Astrocyte of the spinal cord (primary cell): ENCODE measurements at regions of chr3 and their contacts with region 1.

Region 1: DNA sequence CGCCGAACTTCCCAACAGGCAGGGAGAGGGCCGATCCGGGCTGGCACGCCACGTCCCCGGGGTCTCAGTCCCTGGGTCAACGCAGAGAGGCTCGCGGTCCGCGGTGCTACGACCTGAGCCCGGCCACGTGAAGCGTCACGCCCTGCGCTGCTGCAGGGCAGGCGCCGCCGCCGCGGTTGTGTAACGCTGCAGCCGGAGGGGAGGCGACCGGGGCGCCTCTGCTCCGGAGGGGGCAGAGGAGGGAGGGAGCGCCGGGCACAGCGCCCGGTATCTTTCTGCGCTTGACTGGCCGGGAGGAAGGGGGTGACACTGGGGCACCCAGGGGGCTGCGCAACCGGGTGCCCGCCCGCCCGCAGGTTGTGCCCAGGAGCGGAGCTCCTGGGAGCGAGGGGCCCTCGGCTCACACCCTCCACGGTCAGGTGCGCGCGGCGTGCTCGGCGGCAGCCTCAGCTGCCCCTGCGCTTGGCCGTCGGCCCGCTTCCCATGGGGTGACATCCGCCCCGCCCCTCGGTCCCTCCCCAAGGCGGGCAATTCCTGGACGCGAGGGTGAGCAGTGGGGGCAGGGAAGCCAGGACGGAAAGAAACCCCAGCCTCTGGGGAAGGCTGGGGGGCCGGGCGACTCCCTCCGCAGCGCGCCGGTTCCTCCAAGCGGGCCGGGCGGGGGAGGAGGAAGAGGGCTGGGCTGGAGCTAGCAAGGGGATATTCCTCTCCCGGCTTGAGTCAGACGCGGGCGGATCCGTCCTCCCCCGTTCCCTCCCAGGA is 852 bp upstream of the BHLHE40 start:
- DNase-seq: peak; percentile 100
- H3K4me3 ChIP-seq: peak overlapping the region; percentile 52
- CTCF ChIP-seq: no peak

Region 2: DNA sequence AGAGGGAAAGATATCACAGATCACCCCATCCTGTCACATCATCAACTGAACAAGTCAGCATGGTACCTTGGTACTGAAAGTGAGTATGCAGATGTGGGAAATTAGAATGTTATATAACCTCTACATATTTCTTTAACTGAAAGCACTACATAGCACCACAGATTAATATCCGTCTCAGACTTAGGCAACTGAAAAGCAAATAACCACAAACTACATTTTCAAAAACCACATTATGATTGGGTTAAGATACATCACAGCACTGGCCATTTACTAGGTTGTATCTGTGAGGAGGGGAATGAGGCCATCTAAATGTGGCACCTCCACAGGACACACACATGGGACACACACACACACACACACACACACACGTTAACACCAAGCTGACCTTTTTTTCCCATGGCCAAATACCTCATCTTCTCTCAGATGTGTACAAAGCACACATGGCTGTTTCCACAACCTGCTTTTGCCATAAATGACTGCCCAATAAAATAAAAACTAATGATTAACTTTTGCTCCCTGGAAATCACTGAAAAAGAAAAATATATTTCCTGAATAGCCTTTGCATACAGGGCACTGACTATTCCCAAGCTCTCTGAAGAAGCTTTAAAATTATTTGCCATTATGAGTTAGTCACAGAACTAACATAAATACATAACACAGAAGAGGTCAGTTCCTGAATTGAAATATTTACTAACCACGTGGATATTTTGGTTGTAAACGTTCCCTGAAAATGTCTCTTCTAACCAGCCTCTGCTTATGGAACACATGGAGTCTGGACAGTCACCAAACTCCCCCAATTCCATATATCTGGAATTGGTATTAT is 571.4 kb before region 1 on chr3:
- in situ Hi-C with region 1: no loop called
- DNase-seq: peak; percentile 15
- H3K4me3 ChIP-seq: no peak overlapping the region
- CTCF ChIP-seq: no peak

Region 3: DNA sequence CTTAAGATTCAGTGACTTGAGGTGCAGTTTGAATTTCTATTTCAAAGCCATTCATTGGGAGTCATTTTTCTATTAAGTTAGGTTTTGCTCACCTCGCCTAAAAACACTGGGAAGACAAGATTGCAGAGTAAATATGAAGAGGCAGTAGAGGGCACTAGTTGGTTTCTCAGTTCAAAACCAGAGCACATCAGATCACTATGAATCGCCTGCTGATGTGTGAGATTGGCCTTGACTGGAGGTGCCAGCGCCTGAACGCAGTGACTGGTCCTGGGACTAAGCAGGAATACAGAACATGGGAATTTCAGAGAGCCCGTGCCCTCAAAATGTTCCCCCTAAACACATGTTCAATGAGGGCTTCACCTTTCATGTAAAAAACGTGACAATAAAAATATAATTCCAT is 256.3 kb before region 1 on chr3:
- in situ Hi-C with region 1: loop called (anchors 25 kb)
- DNase-seq: peak; percentile 81
- H3K4me3 ChIP-seq: no peak overlapping the region
- CTCF ChIP-seq: peak; percentile 48